A549 (cell line): ENCODE measurements at regions of chr12 and their contacts with region 1.

Region 1: DNA sequence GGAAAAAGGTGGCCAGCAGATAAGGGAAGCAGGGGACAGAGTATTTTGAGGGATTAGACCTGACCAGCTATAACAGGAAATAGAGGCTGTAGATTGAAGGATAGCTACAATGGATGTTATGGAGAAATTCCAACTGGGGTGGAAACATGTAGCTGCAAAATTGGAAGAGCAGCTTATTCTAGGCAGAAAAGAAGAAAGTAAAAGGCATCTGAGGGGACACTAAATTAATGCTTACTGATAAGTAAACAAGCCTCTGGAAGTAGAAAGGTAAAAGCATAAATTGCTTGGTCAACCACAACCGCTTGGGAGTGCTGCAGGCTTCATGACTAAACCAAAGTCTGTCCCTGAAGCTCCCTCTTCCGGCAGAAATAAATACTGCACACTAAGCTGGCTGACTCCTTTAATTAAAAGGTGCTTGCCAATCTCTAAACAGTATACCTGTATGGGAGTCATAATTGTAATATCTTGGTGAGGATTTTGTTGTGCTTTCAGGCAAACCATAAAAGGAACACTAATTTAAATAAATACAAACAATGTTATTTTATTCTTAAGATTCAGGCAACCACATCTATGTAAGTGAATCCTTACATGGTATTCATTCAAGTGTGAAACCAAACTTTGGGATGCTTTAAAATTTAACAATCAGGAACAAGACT is 7.7 kb downstream of the UBC start:
- DNase-seq: peak; percentile 82 to 96
- ATAC-seq: peak; percentile 16 to 34; a peak in 3 of 6 replicates
- H3K4me3 ChIP-seq: no peak overlapping the region
- H3K27ac ChIP-seq: peak overlapping the region; percentile 72 to 85
- H3K4me1 ChIP-seq: peaks cover 75% of the 10 kb centered on the region
- CTCF ChIP-seq: peak; percentile 100
- EP300 ChIP-seq: no peak
- POLR2A ChIP-seq: no peak
- RAD21 ChIP-seq: peak; percentile 98

Region 2: GRCh38 chr12:124774462-124775167 is 132.1 kb before region 1 on chr12:
- CTCF ChIA-PET with region 1: interaction called, 12 read pairs
- POLR2A ChIA-PET with region 1: interaction called, 12 read pairs
- DNase-seq: no peak
- ATAC-seq: no peak
- H3K4me3 ChIP-seq: no peak overlapping the region
- H3K27ac ChIP-seq: no peak overlapping the region
- H3K4me1 ChIP-seq: peaks cover 50% of the 10 kb centered on the region
- CTCF ChIP-seq: no peak
- EP300 ChIP-seq: no peak
- POLR2A ChIP-seq: no peak
- RAD21 ChIP-seq: no peak

Region 3: GRCh38 chr12:124872068-124872719 is 34.5 kb before region 1 on chr12:
- CTCF ChIA-PET with region 1: interaction called, 10 read pairs
- POLR2A ChIA-PET with region 1: no interaction called
- DNase-seq: no peak
- ATAC-seq: no peak
- H3K4me3 ChIP-seq: no peak overlapping the region
- H3K27ac ChIP-seq: no peak overlapping the region
- H3K4me1 ChIP-seq: peaks cover 27% of the 10 kb centered on the region
- CTCF ChIP-seq: no peak
- EP300 ChIP-seq: no peak
- POLR2A ChIP-seq: no peak
- RAD21 ChIP-seq: no peak

Region 4: GRCh38 chr12:124917135-124917840 is 10.6 kb after region 1 on chr12:
- CTCF ChIA-PET with region 1: interaction called, 207 read pairs
- POLR2A ChIA-PET with region 1: interaction called, 41 read pairs
- DNase-seq: peak; percentile 77 to 100
- ATAC-seq: peak; percentile 76 to 81
- H3K4me3 ChIP-seq: peak overlapping the region; percentile 42
- H3K27ac ChIP-seq: peak overlapping the region; percentile 97 to 98
- H3K4me1 ChIP-seq: peaks cover 47% of the 10 kb centered on the region
- CTCF ChIP-seq: no peak
- EP300 ChIP-seq: peak; percentile 14 to 70; a peak in 2 of 5 replicates
- POLR2A ChIP-seq: no peak
- RAD21 ChIP-seq: peak; percentile 10 to 17; a peak in 2 of 5 replicates

Region 5: DNA sequence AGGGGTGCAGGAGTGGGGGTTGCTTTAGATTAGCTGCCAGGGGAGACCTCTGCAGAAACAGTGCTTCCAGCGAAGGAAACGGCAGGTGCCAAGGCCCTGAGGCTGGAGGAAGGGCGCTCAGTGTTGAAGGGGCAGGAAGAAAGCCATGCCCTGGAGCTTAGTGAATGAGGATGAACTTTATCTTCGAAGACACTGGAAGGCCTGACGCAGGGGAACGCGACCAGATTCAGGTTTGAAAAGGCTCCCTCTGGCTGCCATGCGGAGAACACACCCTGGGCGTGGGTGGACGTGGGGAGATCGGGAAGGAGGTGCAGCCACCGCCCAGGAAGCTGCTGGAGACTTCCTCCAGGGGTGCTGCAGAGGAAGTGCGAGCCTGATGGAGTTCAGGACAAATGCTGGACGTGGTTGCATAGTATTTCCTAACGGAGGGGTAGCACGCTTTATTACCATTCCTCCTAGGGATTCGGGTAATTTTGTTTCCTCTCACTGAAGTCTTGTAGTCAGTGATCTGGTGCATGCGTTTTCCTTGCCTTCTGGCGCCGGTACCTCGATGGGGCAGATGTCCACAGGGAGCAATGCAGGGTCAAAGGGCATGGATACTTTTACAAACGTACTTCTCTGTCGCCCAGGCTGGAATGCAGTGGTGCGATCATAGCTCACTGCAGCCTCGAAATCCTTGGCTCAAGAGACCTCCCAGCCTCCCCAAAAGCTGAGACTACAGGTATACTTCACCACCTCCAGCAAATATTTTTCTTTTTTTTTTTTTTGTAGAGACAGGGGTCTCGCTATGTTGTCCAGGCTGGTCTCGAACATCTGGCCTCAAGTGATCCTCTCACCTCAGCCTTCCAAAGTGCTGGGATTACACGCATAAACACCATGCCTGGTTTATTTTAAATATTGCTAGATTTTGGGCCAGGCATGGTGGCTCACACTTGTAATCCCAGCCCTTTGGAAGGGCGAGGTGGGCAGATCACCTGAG is 34.1 kb after region 1 on chr12:
- CTCF ChIA-PET with region 1: interaction called, 243 read pairs
- POLR2A ChIA-PET with region 1: interaction called, 23 read pairs
- DNase-seq: peak; percentile 75 to 96
- ATAC-seq: peak; percentile 69 to 72
- H3K4me3 ChIP-seq: peak overlapping the region; percentile 32
- H3K27ac ChIP-seq: peak overlapping the region; percentile 88 to 92
- H3K4me1 ChIP-seq: peaks cover 29% of the 10 kb centered on the region
- CTCF ChIP-seq: peak; percentile 78
- EP300 ChIP-seq: no peak
- POLR2A ChIP-seq: peak; percentile 53
- RAD21 ChIP-seq: peak; percentile 53 to 59